ENCODE measurements at regions of chr16 and their contacts with region 1.

Region 1: DNA sequence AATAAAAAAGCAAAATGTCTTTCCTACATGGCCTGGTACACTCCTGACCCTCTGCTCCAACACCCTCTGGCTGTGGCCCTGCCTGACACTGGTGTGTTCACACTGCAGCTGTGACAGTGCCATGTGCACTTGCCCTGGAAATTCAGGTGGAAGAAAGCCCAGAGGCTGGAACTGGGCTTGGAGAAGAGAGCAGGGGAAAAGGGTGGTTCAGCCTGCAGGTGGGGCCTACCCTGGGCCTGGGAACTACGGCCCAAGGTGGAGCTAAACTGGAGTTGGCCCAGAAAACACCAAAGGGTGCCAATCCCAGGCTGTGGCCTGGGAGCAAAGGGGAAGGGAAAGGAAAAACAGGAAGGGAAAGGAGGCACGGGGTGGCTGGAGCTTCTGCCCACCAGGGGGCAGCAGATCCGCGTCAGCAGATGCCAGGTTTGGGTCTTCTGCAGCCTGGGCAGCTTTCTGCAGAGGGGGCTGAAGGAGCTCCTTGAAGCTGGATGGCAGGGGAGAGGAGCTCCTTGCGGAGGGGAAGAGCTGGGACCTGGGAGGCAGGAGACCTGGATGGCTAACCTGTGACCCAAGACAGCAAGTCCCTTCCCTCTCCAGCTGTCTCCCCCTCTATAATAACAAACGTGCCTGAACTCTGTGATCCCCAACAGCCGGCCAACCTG is 15.4 kb upstream of the CTCF start:
- DNase-seq: peak; percentile 83
- ATAC-seq: peak; percentile 44
- H3K4me3 Mint-ChIP-seq: peak overlapping the region; percentile 84
- H3K27ac Mint-ChIP-seq: peak overlapping the region; percentile 99
- H3K4me1 Mint-ChIP-seq: peaks cover 43% of the 10 kb centered on the region
- H3K27me3 Mint-ChIP-seq: no peaks in the 10 kb centered on the region

Region 2: GRCh38 chr16:67384778-67385510 is 161.9 kb before region 1 on chr16:
- POLR2A ChIA-PET with region 1: no interaction called
- DNase-seq: no peak
- ATAC-seq: no peak
- H3K4me3 Mint-ChIP-seq: no peak overlapping the region
- H3K27ac Mint-ChIP-seq: no peak overlapping the region
- H3K4me1 Mint-ChIP-seq: no peaks in the 10 kb centered on the region
- H3K27me3 Mint-ChIP-seq: peaks cover 11% of the 10 kb centered on the region

Region 3: DNA sequence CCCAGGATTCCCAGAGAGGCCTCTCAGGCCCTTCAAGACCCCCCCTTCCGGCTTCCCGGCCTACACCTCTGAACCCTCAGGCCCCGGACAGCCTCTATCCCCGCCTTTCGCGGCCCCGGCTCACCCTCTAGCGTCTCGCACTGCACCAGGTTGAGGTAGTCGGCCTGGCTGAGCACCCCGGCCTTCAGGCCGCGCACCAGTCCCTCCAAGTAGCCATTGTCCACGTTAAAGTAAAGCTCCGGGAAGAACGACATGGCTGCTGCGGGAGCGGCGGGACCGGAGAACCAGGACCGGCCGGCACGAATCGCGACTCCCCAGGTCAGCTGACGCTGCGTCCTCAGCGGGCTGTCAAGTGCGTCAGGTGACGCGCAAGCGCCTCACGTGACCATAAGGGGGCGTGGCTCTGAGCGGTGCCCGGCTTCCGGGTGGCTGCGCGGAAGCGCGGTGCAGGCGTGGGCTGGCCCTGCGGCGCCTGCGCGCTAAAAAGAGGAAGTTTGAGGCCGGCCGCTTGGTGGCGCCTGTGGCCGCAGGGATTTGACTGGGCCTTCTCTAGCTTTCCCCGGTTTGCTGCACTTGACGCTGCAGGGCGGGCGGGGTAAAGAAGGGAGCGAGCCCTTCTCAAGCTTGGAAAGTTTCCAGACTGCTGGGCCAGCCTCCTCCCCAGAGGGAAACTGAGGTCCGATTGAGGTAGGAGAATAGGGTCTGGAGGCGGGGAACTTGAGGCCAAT is 65.9 kb before region 1 on chr16 and contains the start of gene ATP6V0D1:
- POLR2A ChIA-PET with region 1: interaction called, 10 read pairs
- DNase-seq: peak; percentile 100
- ATAC-seq: peak; percentile 89
- H3K4me3 Mint-ChIP-seq: peak within 1 kb of the TSS; percentile 93
- H3K27ac Mint-ChIP-seq: peak within 1 kb of the TSS; percentile 98
- H3K4me1 Mint-ChIP-seq: peaks cover 14% of the 10 kb centered on the region
- H3K27me3 Mint-ChIP-seq: no peaks in the 10 kb centered on the region
- total RNA-seq, gene ATP6V0D1: 41.8 to 48.8 TPM

Region 4: DNA sequence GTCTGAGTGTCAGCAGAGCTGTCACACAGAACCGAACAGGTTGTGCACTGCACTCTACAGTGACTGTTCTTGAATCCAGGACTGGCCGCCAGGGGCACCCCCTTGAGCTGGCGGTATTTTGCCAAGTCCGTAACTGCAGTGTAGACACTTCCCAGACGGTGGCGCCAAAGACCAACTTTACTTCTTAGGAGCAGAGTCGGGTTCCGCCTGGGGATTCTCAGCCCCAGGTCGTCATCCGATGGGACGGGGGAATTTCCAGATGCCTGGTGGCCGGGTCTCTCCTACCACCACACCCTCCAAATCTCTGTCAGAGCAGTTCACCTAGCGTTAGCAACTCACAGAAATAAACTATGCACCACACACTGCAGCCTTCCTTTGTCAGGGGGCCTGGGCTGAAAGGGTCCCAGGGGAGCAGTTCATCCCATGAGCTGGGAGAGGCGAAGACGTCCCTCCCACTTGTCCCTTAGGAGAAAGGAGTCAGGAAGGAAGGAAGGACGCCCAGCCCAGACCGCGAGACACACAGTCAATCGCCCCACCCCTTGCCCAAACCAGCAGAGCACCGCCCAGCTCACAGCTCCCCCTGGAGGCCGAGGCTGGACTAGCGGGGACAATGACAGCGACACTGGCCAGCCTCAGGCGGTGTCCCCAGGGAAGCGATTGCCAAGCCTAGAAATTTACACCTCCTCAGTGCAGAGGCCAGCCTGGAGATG is 25.6 kb before region 1 on chr16:
- POLR2A ChIA-PET with region 1: interaction called, 10 read pairs
- DNase-seq: peak; percentile 96
- ATAC-seq: peak; percentile 84
- H3K4me3 Mint-ChIP-seq: peak overlapping the region; percentile 85
- H3K27ac Mint-ChIP-seq: peak overlapping the region; percentile 91
- H3K4me1 Mint-ChIP-seq: peaks cover 37% of the 10 kb centered on the region
- H3K27me3 Mint-ChIP-seq: no peaks in the 10 kb centered on the region

Region 5: GRCh38 chr16:67561824-67562525 is 15.1 kb after region 1 on chr16:
- POLR2A ChIA-PET with region 1: interaction called, 155 read pairs
- DNase-seq: peak; percentile 99
- ATAC-seq: peak; percentile 90
- H3K4me3 Mint-ChIP-seq: peak overlapping the region; percentile 89
- H3K27ac Mint-ChIP-seq: peak overlapping the region; percentile 92
- H3K4me1 Mint-ChIP-seq: peaks cover 28% of the 10 kb centered on the region
- H3K27me3 Mint-ChIP-seq: no peaks in the 10 kb centered on the region

Region 6: GRCh38 chr16:67628216-67628615 is 81.3 kb after region 1 on chr16:
- POLR2A ChIA-PET with region 1: no interaction called
- DNase-seq: no peak
- ATAC-seq: no peak
- H3K4me3 Mint-ChIP-seq: no peak overlapping the region
- H3K27ac Mint-ChIP-seq: no peak overlapping the region
- H3K4me1 Mint-ChIP-seq: peaks cover 2% of the 10 kb centered on the region
- H3K27me3 Mint-ChIP-seq: no peaks in the 10 kb centered on the region

Region 7: GRCh38 chr16:67660564-67661028 is 113.7 kb after region 1 on chr16 and contains the start of gene PARD6A:
- POLR2A ChIA-PET with region 1: interaction called, 19 read pairs
- DNase-seq: peak; percentile 93
- ATAC-seq: peak; percentile 85
- H3K4me3 Mint-ChIP-seq: peak within 1 kb of the TSS; percentile 95
- H3K27ac Mint-ChIP-seq: peak within 1 kb of the TSS; percentile 95
- H3K4me1 Mint-ChIP-seq: peaks cover 14% of the 10 kb centered on the region
- H3K27me3 Mint-ChIP-seq: no peaks in the 10 kb centered on the region
- total RNA-seq, gene PARD6A: 9.5 to 11.1 TPM

Region 8: DNA sequence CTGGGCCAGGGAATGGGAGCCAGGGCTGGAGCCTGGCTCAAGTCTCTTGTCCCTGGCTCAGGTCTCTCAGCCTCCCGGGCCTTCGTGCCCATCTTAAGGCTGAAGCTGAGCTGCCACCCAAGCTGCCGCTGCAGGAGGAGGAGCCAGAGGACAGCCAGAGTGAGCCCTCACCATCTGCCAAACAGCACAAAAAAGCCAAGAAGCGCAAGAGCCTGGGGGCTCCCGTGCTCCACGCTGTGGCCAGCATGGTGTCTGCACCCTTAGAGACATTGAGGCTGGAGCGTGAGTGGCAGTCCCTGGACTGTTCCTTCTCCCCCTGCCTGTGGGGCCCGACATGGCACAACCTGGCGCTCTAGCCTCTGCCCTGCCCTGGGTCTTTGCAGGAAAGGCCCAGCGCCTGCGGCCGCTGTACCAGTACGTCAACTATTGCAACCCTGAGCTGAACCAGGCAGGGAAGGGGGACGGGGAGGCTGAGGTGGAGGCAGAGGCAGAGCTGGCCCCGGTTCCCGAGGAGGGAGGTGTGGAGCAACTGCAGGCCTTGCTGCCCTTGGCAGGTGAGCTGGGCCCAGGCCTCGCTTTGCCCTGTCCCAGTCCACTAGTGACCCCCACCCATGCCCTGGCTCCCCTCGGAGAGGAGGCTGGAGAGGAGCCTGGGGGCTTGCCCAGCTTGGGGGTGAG is 121.1 kb after region 1 on chr16:
- POLR2A ChIA-PET with region 1: interaction called, 14 read pairs
- DNase-seq: peak; percentile 81
- ATAC-seq: peak; percentile 91
- H3K4me3 Mint-ChIP-seq: peak overlapping the region; percentile 93
- H3K27ac Mint-ChIP-seq: no peak overlapping the region
- H3K4me1 Mint-ChIP-seq: peaks cover 9% of the 10 kb centered on the region
- H3K27me3 Mint-ChIP-seq: no peaks in the 10 kb centered on the region

Measured in activated naive CD8-positive, alpha-beta T cell treated with anti-CD3 and anti-CD28 coated beads, Interleukin-2, amount 10 ng/mL, durations not matched to agents 7 days and 5 days (primary cell).